ENCODE measurements at regions of chr7 and their contacts with region 1.

Region 1: GRCh38 chr7:151017953-151018420 is 6.3 kb downstream of the ATG9B start:
- DNase-seq: peak; percentile 90
- ATAC-seq: peak; percentile 59
- H3K4me3 Mint-ChIP-seq: peak overlapping the region; percentile 66
- H3K27ac Mint-ChIP-seq: peak overlapping the region; percentile 80
- H3K4me1 Mint-ChIP-seq: peaks cover 47% of the 10 kb centered on the region
- H3K27me3 Mint-ChIP-seq: peaks cover 9% of the 10 kb centered on the region

Region 2: GRCh38 chr7:150974468-150975391 is 43.3 kb before region 1 on chr7:
- CTCF ChIA-PET with region 1: interaction called, 3 read pairs
- POLR2A ChIA-PET with region 1: interaction called, 3 read pairs
- intact Hi-C with region 1: loop called (anchors 2 to 5 kb)
- DNase-seq: peak; percentile 85
- ATAC-seq: peak; percentile 81
- H3K4me3 Mint-ChIP-seq: peak overlapping the region; percentile 73
- H3K27ac Mint-ChIP-seq: peak overlapping the region; percentile 51
- H3K4me1 Mint-ChIP-seq: peaks cover 30% of the 10 kb centered on the region
- H3K27me3 Mint-ChIP-seq: peaks cover 21% of the 10 kb centered on the region

Region 3: GRCh38 chr7:151085691-151086620 is 68.0 kb after region 1 on chr7 and contains the start of gene AGAP3:
- CTCF ChIA-PET with region 1: interaction called, 6 read pairs
- POLR2A ChIA-PET with region 1: no interaction called
- intact Hi-C with region 1: loop called in 1 of 2 experiments (anchors 2 kb)
- DNase-seq: peak; percentile 73
- ATAC-seq: peak; percentile 8
- H3K4me3 Mint-ChIP-seq: peak within 1 kb of the TSS; percentile 81
- H3K27ac Mint-ChIP-seq: peak within 1 kb of the TSS; percentile 84
- H3K4me1 Mint-ChIP-seq: peaks cover 43% of the 10 kb centered on the region
- H3K27me3 Mint-ChIP-seq: peaks cover 7% of the 10 kb centered on the region
- total RNA-seq, gene AGAP3: 29.4 to 33.2 TPM

Measured in activated CD4-positive, alpha-beta T cell treated with anti-CD3 and anti-CD28 coated beads for 36 hours (primary cell).